ENCODE measurements at regions of chr1 and their contacts with region 1.

Region 1: DNA sequence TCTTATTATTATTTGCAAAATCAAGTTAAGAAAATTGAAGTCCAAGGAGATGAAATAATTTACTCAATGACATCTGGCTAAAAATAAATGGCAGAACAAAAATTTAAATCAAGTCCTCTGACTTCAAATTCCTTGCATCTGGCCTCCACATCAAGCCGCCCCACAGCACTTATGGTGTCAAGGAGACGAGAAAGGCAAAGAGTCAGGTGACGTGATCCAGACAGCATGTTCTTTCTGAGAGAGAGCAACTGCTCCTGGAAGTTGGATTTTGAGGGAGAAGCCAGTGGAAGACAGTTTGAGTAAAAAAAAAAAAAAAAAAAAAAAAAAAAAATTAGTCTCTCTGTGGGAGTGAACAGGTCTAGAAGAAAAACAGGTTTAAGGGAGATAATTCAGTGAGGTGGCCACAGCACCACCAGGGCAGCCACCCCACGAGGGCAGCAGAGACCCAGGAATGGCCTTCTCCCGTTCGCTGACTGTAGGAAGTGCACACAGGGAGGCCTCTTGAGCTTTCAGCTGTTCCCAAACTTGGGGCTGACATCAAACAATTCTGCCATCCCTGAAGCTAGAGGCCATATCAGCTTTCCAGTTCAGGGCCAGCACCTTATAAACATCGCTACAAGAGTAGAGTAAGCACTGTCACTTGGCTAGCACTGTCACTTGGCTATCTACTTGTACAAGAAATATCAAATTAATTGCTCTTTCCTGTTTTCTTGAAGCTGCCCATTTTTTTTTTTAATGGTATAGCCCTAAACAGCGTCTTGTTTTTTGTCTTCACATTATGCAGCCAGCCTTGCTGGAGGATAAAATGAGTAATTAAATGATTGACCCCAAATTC is 7.8 kb downstream of the C1orf162 start:
- DNase-seq: peak; percentile 85
- ATAC-seq: peak; percentile 97

Region 2: DNA sequence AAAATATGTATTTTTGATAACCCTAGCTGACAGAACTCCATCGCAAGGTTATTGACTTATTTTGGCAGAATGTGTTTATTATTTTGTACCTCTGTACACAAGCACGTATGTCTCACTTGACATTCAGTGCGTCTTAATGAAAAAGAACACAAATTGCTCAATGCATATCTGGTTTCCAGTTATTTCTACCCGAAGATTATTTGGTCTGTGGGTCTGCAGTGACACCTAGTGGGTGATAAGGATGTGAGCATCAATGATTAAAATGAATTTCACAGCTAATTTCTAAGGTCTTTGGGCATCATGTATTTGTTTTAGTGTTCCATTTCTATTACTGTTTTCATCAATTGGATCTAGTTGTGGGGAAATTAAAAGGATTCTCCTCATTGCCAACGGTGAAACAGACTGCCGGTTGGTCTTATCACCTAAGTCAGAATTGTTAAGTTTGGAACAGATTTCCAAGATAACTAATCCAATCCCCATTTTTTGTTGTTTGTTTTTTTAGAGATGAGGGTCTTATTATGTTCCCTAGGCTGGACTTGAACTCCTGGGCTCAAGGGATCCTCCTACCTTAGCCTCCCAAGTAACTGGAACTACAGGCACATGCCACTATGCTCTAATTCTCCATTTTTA is 288.0 kb after region 1 on chr1:
- intact Hi-C with region 1: loop called (anchors 10 kb)
- DNase-seq: no peak
- ATAC-seq: peak; percentile 78